Mammary epithelial cell (primary cell): ENCODE measurements at regions of chr20 and their contacts with region 1.

Region 1: GRCh38 chr20:2387180-2387577 is 6.5 kb downstream of the TGM6 start:
- DNase-seq: no peak
- H3K4me3 ChIP-seq: no peak overlapping the region
- H3K27ac ChIP-seq: peak overlapping the region; percentile 57
- H3K4me1 ChIP-seq: peaks cover 38% of the 10 kb centered on the region
- H3K27me3 ChIP-seq: no peaks in the 10 kb centered on the region
- CTCF ChIP-seq: peak; percentile 62 to 76

Region 2: GRCh38 chr20:2206957-2207769 is 180.0 kb before region 1 on chr20:
- CTCF ChIA-PET with region 1: interaction called, 10 read pairs
- dilution Hi-C with region 1: no loop called
- in situ Hi-C with region 1: no loop called
- intact Hi-C with region 1: no loop called
- DNase-seq: peak; percentile 52
- H3K4me3 ChIP-seq: peak overlapping the region; percentile 55 to 67 (median 57)
- H3K27ac ChIP-seq: no peak overlapping the region
- H3K4me1 ChIP-seq: peaks cover 11% of the 10 kb centered on the region
- H3K27me3 ChIP-seq: peaks cover 3% of the 10 kb centered on the region
- CTCF ChIP-seq: peak; percentile 65 to 92

Region 3: DNA sequence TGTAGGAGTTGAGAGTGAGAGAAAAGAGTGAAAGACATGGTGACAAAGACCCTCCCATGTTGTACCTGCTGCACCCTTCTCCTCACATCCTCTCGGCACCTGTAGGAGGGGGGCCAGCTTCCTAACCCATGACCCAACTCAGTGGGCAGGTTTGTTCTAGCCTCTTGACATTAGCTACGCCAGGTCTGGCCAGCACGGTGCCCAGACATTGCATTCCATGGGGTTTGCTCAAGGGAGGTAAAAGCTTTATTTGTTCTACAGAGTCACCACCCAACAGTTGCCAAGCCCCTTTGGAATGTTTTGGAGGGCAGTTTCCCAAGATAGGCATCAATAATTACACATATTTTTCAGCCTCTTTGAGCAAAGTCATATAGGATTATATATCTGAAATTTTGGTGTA is 29.2 kb before region 1 on chr20:
- CTCF ChIA-PET with region 1: no interaction called
- dilution Hi-C with region 1: no loop called
- in situ Hi-C with region 1: no loop called
- intact Hi-C with region 1: loop called (anchors 1 kb)
- DNase-seq: peak; percentile 76
- H3K4me3 ChIP-seq: no peak overlapping the region
- H3K27ac ChIP-seq: peak overlapping the region; percentile 82
- H3K4me1 ChIP-seq: peaks cover 22% of the 10 kb centered on the region
- H3K27me3 ChIP-seq: no peaks in the 10 kb centered on the region
- CTCF ChIP-seq: no peak

Region 4: GRCh38 chr20:2429061-2429460 is 41.9 kb after region 1 on chr20:
- CTCF ChIA-PET with region 1: no interaction called
- dilution Hi-C with region 1: loop called (anchors 5 kb)
- in situ Hi-C with region 1: no loop called
- intact Hi-C with region 1: no loop called
- DNase-seq: no peak
- H3K4me3 ChIP-seq: no peak overlapping the region
- H3K27ac ChIP-seq: no peak overlapping the region
- H3K4me1 ChIP-seq: no peaks in the 10 kb centered on the region
- H3K27me3 ChIP-seq: no peaks in the 10 kb centered on the region
- CTCF ChIP-seq: no peak

Region 5: DNA sequence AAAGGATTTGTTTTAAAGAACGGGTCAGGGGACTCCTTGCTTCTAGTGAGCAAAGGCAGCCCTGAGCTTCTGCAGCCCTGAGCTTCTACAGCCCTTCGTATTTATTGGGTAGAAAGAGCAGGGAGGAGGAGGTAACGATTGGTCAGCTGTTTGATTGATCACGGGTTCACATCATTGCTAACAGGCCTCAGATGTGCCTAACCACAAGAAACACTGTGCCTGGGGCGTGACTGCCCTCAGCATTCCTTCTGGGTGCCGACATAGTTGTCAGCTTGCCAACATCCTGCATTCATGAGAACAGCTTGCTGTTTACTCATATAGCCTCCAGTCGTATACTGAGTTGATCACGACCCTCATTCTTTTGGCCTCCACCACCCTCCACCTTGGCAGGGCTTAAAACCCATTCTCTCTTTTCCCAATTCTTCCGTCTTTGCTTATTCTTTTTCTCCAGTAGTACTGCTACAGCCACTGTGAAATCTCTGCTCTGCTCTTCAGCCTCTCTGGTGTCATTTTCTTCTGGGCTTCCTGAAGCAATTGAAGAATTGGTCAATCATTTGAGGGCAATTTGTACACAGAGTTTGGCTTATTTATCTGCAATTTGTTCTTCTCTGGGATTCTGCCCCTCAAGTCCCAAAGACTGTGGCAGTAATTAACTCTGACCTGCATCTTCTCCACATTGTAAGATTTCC is 239.8 kb after region 1 on chr20:
- CTCF ChIA-PET with region 1: interaction called, 15 read pairs
- dilution Hi-C with region 1: no loop called
- in situ Hi-C with region 1: no loop called
- intact Hi-C with region 1: no loop called
- DNase-seq: peak; percentile 94
- H3K4me3 ChIP-seq: no peak overlapping the region
- H3K27ac ChIP-seq: no peak overlapping the region
- H3K4me1 ChIP-seq: no peaks in the 10 kb centered on the region
- H3K27me3 ChIP-seq: no peaks in the 10 kb centered on the region
- CTCF ChIP-seq: no peak